ENCODE measurements at regions of chr19 and their contacts with region 1.

Region 1: DNA sequence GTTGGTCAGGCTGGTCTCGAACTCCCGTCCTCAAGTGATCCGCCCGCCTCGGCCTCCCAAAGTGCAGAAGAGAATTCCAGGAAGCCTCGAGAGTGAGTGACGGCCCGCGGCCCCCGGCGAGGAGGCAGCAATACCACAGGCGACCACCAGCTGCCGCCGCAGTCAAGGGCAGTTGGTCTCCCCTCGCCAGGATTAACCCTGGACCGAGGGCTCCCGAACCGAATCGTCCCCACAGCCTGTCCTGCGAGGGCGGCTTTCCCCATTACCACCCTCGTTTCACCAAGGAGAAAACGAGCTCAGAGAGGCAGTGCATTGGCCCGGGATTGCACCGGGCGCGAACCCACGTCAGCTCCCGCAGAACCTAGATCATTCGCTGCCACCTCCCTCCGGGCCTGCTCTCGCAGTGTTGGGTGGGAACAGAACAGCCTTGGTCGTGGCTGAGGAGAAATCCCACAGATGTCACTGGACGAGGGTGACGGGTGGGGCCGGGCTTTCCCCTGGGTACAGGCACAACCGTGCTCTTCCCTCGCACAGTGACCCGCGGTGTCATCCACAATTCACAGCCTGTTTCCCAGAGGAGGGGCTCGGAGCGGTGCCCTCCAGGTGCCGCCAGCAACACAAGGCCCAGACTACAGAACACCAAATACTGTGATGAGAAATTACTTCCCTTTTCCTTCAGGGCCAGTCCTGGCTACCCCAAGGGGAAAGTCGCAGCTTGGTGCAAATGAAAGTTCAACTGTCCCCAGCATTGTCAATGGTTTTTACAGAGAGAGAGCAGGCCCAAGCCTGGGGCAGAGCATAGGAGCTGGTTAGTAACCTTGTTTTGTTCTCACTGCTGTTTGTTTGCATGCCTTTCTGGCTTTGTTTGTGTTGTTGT is 24.8 kb downstream of the C2CD4C start:
- DNase-seq: no peak
- ATAC-seq: peak; percentile 74

Region 2: GRCh38 chr19:336032-336614 is 48.0 kb before region 1 on chr19:
- intact Hi-C with region 1: no loop called
- DNase-seq: peak; percentile 50
- ATAC-seq: peak; percentile 46

Region 3: DNA sequence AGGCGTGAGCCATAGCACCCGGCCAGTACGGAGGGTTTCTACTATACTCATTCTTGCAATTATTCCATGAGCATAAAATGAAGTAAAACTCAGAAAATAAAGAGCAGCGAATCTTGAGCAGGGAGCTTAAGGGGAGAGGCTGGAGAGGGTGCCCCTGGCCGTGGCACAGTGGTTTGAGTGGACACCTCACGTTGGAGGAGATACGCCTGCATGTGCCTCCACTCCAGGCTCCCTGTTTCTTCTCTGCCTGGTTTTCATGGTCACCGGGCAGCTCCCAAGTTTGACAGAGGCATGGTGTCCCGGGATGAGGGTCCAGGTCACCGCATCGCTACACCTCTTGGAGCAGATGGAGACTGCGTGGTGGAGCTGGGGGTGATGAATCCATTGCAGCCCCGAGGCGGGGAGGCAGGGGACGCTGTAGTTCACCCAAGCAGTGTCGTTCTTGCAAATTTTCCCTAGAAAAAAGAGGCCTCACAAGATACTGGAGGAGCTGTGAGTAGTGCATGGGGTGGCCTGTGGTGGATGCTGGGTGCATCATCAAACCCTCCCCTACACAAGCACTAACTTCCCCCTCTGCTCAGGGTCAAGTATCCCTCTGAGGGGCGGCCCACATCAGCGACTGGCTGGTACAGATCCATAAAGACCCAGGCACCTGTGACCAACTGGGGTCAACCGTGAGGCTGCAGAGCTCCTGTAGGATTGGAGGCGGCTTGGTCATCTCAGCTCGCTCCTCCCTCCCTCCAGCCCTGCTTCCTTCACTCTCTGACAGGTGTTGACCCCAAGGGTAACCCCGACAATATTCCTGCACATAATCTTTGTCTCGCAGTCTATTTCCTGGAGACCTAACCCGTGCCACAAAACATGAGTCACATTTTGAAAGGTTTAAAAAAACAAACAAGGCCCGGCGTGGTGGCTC is 36.0 kb before region 1 on chr19:
- intact Hi-C with region 1: no loop called
- DNase-seq: peak; percentile 20
- ATAC-seq: no peak

Region 4: DNA sequence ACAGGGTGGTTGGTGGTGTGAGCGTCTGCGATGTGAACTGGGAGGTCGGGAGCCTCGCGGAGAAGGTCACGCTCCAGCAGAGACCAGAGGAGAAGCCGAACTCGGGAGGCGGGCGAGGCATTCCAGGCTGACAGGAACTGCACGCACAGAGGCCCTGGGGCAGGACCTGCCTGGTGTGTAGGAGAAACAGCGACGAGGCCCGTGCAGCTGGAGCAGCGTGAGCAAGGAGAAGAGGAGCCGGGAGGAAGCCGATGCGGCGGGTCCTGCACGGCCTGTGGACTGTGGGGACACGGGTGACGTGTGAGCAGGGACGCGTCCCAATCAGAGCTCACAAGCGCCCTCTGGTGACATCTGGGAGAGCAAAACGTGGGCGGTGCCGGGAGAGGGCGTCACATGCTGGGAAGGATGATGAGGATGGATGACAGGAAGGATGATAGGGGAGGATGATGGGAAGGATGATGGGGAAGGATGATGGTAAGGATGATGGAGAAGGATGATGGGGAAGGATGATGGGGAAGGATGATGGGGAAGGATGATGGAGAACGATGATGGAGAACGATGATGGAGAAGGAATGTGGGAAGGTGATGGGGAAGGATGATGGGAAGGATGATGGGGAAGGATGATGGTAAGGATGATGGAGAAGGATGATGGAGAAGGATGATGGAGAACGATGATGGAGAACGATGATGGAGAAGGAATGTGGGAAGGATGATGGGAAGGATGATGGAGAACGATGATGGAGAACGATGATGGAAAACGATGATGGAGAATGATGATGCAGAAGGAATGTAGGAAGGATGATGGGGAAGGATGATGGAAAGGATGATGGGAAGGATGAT is 96.1 kb after region 1 on chr19:
- intact Hi-C with region 1: loop called (anchors 5 kb)
- DNase-seq: peak; percentile 92
- ATAC-seq: peak; percentile 98

Measured in Right ventricle myocardium superior (tissue), 1 donor.